Naive thymus-derived CD4-positive, alpha-beta T cell (primary cell): ENCODE measurements at regions of chr19 and their contacts with region 1.

Region 1: GRCh38 chr19:2507109-2507508 is 31.2 kb downstream of the GADD45B start:
- DNase-seq: peak in 7 of 9 donors; percentile 41 to 70 (median 62)
- ATAC-seq: peak; percentile 72
- H3K4me3 ChIP-seq: no peak overlapping the region
- H3K4me3 Mint-ChIP-seq: peak overlapping the region; percentile 25 to 77 (median 68)
- H3K27ac ChIP-seq: no peak overlapping the region
- H3K27ac Mint-ChIP-seq: peak overlapping the region in 7 of 9 donors; percentile 74 to 92 (median 86)
- H3K4me1 ChIP-seq: peaks cover 11 to 15% of the 10 kb centered on the region in 2 donors
- H3K4me1 Mint-ChIP-seq: peaks cover 6 to 30% (median 21%) of the 10 kb centered on the region in 7 donors
- H3K27me3 ChIP-seq: no peaks in the 10 kb centered on the region
- H3K27me3 Mint-ChIP-seq: peaks cover 0 to 7% (median 0%) of the 10 kb centered on the region in 5 donors

Region 2: DNA sequence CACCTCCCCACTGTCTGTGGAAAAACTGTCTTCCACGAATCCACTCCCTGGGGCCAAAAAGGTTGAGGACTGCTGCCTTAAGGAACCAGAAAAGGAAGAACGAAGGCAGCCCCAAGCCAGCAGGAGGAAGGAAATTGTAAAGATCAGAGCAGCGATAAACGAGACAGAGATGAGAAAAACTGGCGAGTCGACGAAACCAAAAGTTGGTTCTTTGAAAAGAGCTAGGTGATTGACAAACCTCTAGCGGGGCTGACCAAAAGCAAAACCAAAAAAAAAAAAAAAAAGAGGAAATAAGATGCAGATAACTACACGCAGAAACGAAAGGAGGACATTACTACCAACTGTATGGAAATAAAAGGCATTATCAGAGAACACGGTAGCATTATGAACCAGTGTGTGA is 45.8 kb after region 1 on chr19:
- CTCF ChIA-PET with region 1: no interaction called
- POLR2A ChIA-PET with region 1: interaction called, 4 read pairs
- intact Hi-C with region 1: loop called in 1 of 2 experiments (anchors 2 kb)
- DNase-seq: peak in 8 of 9 donors; percentile 48 to 77 (median 66)
- ATAC-seq: peak; percentile 82
- H3K4me3 ChIP-seq: peak overlapping the region; percentile 8
- H3K4me3 Mint-ChIP-seq: peak overlapping the region; percentile 67 to 93 (median 83)
- H3K27ac ChIP-seq: peak overlapping the region; percentile 59
- H3K27ac Mint-ChIP-seq: peak overlapping the region; percentile 48 to 86 (median 81)
- H3K4me1 ChIP-seq: peaks cover 10 to 12% of the 10 kb centered on the region in 2 donors
- H3K4me1 Mint-ChIP-seq: peaks cover 15 to 34% (median 20%) of the 10 kb centered on the region in 7 donors
- H3K27me3 ChIP-seq: no peaks in the 10 kb centered on the region
- H3K27me3 Mint-ChIP-seq: no peaks in the 10 kb centered on the region